Activated naive CD4-positive, alpha-beta T cell treated with anti-CD3 and anti-CD28 coated beads for 36 hours (primary cell): ENCODE measurements at regions of chr2 and their contacts with region 1.

Region 1: DNA sequence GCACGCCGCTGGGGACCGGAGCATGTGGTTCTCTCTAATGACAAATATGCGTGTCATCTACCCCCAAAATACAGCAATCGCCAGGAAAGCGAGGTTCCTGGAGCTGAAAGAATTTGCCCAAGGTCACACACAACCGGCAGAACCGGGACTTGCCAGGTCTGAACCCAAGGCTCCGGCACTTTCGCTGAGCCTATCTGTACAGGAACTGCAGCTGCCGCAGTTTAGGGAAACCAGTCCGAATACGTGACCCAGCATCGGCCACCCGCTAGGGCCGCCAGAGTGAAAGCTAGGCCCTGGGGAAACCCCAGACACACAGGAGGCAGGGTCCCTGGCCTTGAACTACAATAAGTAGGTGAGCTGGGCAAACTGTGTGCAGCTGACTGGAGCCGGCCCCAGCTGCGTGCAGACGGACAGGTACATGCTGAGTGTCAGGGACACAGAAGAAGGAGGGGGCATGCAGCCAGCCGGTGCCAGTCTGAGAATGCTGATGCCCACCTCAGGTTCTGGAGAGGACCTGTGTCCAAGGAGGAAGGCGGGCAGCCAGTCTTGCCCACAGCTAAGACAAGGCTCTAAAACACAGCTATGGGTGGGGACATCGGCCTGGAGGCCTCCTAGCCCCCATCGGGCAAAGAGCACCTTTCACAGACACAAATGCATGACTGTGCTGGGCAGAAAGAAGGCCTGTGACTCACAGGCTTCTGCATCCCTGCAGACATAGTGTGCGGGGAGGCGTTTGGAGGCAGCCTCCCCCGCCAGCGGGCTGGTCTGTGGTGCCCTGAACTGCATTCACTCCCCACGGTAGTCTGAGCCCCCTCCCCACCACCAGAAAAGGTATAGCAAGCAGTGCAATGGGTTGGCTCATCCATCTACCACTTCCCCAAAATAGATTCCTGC is 107.5 kb upstream of the ID2 start:
- DNase-seq: no peak
- H3K4me3 Mint-ChIP-seq: no peak overlapping the region
- H3K27ac Mint-ChIP-seq: peak overlapping the region; percentile 28
- H3K4me1 Mint-ChIP-seq: peaks cover 35% of the 10 kb centered on the region
- H3K27me3 Mint-ChIP-seq: peaks cover 5% of the 10 kb centered on the region

Region 2: DNA sequence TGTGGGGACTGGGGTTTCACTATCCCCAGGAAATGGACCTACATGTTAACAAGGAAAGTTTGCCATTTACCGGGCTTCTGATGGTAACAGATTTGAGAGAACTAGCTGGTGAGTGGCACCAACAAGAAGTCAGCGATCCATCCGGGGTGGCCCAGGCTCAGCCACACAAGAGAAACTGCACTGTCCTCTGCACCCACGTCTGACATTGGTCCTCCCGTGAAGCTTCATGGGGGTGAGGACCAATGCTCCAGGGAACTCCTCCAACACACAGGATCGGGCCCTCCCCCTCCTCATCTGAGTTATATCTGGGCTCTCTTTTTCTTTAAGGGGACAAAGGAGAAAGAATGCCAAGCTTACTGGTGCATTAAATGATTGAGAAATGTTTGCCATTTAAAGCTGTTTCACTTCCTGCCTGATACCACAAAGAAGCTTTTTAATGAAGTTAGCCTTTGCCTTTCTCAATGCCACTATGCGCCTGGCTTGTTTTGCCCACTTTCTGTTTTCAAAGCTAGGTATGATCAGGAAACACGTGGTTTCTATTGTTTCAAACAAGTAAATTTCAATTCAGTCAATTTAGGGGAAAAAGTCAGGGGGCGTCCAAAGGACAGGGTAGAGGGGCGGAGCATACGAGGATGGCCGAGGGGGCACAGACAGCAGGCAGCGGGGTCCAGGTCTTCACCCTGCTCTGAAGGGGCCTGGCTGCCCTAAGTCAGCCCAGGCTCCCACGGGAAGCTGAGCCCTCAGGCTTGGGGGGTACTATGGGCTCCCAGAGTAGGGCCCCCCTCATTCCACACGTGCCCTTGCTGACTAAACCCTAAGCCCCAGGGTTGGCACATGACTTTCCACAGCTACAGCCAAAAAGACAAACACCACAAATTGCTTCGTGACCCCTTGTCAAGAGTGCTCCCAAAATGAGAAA is 96.6 kb before region 1 on chr2:
- CTCF ChIA-PET with region 1: no interaction called
- intact Hi-C with region 1: no loop called
- DNase-seq: peak; percentile 54
- H3K4me3 Mint-ChIP-seq: no peak overlapping the region
- H3K27ac Mint-ChIP-seq: peak overlapping the region; percentile 31
- H3K4me1 Mint-ChIP-seq: peaks cover 65% of the 10 kb centered on the region
- H3K27me3 Mint-ChIP-seq: no peaks in the 10 kb centered on the region

Region 3: DNA sequence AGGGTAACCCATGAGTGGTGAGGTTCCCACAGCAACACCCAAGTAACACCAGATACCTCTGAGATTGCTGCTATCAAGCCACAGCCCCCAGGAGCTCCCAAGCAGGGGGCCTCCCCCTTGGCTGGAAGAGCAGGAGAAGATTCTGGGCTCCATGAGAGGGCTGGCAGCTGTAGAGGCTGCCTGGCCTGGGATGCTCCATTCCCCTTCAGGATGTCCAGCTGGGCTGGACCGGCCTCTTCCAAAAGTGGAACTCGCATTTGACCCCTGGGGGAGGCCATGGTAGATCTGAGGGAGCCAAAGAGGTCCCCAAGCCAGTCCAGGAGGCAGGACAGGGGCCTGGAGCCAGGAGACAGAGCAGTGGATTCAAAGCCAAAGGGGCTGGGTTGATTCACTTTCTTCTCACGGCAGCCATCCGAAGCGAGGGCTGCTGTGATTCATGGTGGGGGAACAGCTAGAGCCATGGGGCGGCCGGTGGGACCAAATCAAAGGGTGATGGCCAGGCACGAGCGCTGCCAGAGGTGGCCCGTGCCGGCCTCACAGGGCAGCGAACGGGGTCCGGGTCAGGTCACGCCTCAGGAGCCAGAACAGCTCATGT is 12.2 kb after region 1 on chr2:
- CTCF ChIA-PET with region 1: no interaction called
- intact Hi-C with region 1: loop called (anchors 1 kb)
- DNase-seq: no peak
- H3K4me3 Mint-ChIP-seq: no peak overlapping the region
- H3K27ac Mint-ChIP-seq: peak overlapping the region; percentile 77
- H3K4me1 Mint-ChIP-seq: peaks cover 18% of the 10 kb centered on the region
- H3K27me3 Mint-ChIP-seq: peaks cover 23% of the 10 kb centered on the region

Region 4: DNA sequence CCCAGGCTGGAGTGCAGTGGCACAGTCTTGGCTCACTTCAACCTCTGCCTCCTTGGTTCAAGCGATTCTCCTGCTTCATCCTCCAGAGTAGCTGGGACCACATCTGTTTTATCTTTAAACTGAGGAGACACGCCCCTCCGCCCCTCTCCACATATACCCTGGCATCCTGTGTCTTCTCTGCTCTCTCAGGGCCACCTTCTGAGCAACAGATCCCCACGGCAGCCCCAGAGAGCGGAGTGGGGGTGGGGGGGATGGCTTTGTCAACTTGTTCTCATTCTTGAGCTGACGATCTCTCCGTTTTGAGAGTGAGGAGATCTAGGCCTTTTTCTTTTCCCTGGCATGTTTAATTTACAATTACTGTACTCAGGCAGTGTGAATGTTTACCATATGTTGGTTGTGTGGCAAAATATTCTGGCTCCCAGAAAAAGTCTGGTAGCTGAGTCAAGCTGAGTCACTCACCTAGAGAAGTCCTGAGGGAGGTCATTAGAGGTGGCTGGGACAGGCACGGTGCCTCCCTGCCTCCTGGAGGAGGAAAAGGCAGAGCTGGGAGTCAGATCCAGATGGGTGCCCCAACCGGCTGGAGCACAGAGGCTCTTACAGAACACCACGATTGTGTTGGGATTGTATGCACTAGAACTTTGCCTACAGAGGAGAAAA is 88.0 kb after region 1 on chr2:
- CTCF ChIA-PET with region 1: no interaction called
- intact Hi-C with region 1: loop called (anchors 5 kb)
- DNase-seq: no peak
- H3K4me3 Mint-ChIP-seq: no peak overlapping the region
- H3K27ac Mint-ChIP-seq: no peak overlapping the region
- H3K4me1 Mint-ChIP-seq: peaks cover 26% of the 10 kb centered on the region
- H3K27me3 Mint-ChIP-seq: peaks cover 5% of the 10 kb centered on the region